ENCODE measurements at regions of chr16 and their contacts with region 1.

Region 1: DNA sequence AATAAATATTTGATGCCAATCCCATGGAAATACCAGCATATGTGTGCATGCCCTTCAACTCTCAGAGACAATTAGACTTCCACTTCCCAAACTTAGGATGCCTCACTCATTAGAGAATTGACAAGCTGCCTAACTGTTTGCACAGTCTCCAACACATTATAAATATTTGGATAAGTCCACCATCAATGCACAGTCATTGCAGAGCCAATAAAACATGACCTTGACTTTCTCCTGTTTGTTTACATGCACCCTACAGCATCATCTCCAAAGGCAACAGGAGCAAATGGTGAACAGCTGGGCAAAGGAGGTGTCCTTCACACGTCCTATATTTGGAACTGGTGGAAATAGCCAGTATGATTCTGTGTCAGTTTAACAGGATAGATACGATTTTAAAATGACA is 804.4 kb upstream of the RBFOX1 start:
- DNase-seq: no peak
- ATAC-seq: no peak
- H3K4me3 ChIP-seq: no peak overlapping the region
- H3K27ac ChIP-seq: no peak overlapping the region
- H3K4me1 ChIP-seq: no peaks in the 10 kb centered on the region
- H3K27me3 ChIP-seq: no peaks in the 10 kb centered on the region

Region 2: DNA sequence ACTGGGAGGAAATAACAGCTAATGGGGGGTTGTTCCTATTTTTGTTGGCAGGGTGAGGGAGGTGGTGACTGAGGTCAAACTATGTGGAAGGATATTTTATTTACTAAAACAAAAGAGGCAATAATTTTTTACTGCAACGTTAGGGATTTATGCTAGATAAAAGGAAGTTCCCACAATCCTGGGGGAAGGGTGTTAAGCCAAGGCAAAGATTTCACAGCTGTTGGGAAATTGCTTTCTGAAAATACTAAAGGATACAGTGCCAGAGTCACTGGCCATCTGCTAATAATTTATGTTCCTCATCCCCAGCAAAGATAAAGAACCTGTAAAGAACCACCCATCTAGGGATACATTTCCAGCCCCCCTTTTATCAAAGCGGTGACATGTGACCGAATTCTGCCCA is 48.4 kb after region 1 on chr16:
- intact Hi-C with region 1: loop called in 1 of 4 experiments (anchors 10 kb)
- DNase-seq: no peak
- ATAC-seq: no peak
- H3K4me3 ChIP-seq: no peak overlapping the region
- H3K27ac ChIP-seq: no peak overlapping the region
- H3K4me1 ChIP-seq: no peaks in the 10 kb centered on the region
- H3K27me3 ChIP-seq: no peaks in the 10 kb centered on the region

Measured in right cardiac atrium (tissue), 5 donors.